Right ventricle myocardium superior (tissue), 1 donor: ENCODE measurements at regions of chr21 and their contacts with region 1.

Region 1: DNA sequence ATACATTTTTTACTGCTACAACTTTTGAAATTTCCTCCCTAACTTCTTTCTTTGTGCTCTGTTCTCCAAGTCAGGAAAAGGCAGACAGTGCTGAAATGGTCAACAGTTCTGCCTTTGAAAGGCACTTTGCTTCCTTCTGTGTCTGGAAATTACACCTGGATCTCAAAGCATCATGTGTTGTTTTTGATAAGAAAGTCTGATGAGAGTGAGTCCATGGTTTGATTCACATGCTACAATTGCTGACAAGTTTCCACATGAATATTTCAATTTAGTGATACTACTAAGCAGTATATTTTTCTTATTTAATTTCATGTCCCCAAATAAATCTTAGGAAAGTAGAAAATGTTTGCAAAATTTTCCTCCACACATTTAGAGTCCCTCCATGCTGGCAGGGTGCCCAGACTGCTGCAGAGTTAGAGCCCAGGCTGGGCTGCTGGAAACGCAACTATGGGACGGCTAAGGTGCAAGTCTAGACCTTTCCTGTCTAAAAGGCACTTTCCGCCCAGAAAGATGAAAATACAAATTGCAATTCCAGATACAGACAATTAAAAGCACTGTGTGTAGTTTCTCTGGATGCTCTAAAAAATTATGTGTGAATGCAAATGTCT is 96.6 kb upstream of the RUNX1 start:
- DNase-seq: peak; percentile 49
- ATAC-seq: no peak

Region 2: GRCh38 chr21:35179990-35180540 is 34.3 kb after region 1 on chr21:
- intact Hi-C with region 1: no loop called
- DNase-seq: no peak
- ATAC-seq: no peak

Region 3: GRCh38 chr21:35191754-35192153 is 46.0 kb after region 1 on chr21:
- intact Hi-C with region 1: loop called (anchors 2 kb)
- DNase-seq: no peak
- ATAC-seq: no peak